Ovary (tissue), 10 donors: ENCODE measurements at regions of chr9 and their contacts with region 1.

Region 1: GRCh38 chr9:36008774-36009300 is 27.9 kb upstream of the RECK start:
- DNase-seq: peak; percentile 20 to 50 (median 31)
- H3K4me3 ChIP-seq: no peak overlapping the region
- H3K27ac ChIP-seq: no peak overlapping the region
- H3K4me1 ChIP-seq: no peaks in the 10 kb centered on the region
- H3K27me3 ChIP-seq: no peaks in the 10 kb centered on the region
- CTCF ChIP-seq: peak; percentile 35 to 72 (median 53)
- EP300 ChIP-seq: no peak
- POLR2A ChIP-seq: no peak

Region 2: GRCh38 chr9:35871497-35871896 is 137.3 kb before region 1 on chr9:
- intact Hi-C with region 1: no loop called
- DNase-seq: no peak
- H3K4me3 ChIP-seq: no peak overlapping the region
- H3K27ac ChIP-seq: no peak overlapping the region
- H3K4me1 ChIP-seq: no peaks in the 10 kb centered on the region
- H3K27me3 ChIP-seq: no peaks in the 10 kb centered on the region
- CTCF ChIP-seq: no peak
- EP300 ChIP-seq: no peak
- POLR2A ChIP-seq: no peak

Region 3: DNA sequence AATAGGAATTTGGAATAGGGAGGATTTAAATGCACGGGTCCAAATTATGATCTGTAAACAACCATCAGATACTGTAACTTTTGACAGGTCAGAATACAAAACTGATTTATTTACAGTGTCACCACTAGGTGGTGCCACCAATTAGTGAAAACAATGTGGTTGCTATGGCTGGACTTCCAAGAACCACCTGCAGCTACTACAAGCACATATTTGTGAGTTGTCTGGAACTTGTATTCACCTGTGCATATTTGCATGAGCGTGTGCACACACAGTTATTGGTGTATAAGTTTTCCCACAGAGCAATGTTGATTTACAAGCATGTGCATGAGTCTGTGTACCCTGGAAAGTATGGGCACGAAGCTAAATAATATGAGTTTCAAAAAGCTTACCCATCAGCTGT is 105.8 kb before region 1 on chr9:
- intact Hi-C with region 1: no loop called
- DNase-seq: no peak
- H3K4me3 ChIP-seq: no peak overlapping the region
- H3K27ac ChIP-seq: no peak overlapping the region
- H3K4me1 ChIP-seq: peaks cover 25% of the 10 kb centered on the region
- H3K27me3 ChIP-seq: no peaks in the 10 kb centered on the region
- CTCF ChIP-seq: peak; percentile 15 to 79 (median 79)
- EP300 ChIP-seq: no peak
- POLR2A ChIP-seq: no peak

Region 4: DNA sequence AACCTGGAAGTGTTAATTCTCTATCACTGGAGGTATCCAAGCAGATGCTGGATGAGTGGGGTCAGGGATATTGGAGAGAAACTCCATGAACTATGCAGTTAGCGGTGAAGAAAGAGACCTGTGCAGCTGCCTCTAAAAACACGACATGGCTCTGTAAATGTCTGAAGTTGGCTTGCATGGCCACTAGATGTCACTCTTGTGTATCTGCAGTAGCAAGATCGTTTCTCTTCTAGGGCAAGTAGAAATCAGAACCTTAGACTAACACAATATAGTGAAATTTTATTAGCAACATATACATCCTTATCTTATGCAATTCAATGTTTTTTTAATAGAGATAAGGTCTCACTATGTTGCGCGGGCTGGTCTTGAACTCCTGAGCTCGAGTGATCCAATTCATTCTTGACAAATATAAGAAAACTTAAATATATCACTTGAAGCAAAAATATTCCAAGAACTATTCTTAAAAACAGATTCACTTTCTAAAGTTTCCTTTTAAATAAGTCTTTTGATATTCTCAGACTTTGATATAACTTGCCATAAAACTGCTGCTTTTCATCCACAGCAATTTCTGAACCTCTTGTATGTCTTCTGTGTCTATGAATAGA is 53.8 kb before region 1 on chr9:
- intact Hi-C with region 1: loop called in 1 of 4 experiments (anchors 5 kb)
- DNase-seq: peak in 2 of 5 donors; percentile 25 to 66
- H3K4me3 ChIP-seq: no peak overlapping the region
- H3K27ac ChIP-seq: no peak overlapping the region
- H3K4me1 ChIP-seq: no peaks in the 10 kb centered on the region
- H3K27me3 ChIP-seq: no peaks in the 10 kb centered on the region
- CTCF ChIP-seq: peak; percentile 45 to 73 (median 65)
- EP300 ChIP-seq: no peak
- POLR2A ChIP-seq: no peak

Region 5: DNA sequence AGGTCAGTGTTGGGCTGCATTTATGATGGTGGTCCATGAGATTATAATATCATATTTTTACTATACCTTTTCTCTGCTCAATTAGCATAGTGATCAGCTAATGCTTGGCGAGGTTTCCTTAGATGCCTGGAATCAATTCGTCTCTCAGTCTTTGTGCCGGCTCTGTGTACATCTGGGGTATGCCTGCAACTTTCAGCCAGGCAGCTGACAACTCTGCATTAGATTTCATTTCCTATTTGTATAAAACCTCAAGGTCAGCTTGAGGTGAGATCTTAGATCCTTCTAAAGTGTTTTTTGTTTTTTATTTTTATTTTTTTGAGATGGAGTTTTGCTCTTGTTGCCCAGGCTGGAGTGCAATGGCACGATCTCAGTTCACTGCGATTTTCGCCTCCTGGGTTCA is 650.7 kb after region 1 on chr9:
- intact Hi-C with region 1: no loop called
- DNase-seq: no peak
- H3K4me3 ChIP-seq: no peak overlapping the region
- H3K27ac ChIP-seq: no peak overlapping the region
- H3K4me1 ChIP-seq: no peaks in the 10 kb centered on the region
- H3K27me3 ChIP-seq: no peaks in the 10 kb centered on the region
- CTCF ChIP-seq: no peak
- EP300 ChIP-seq: no peak
- POLR2A ChIP-seq: no peak